ENCODE measurements at regions of chr20 and their contacts with region 1.

Region 1: GRCh38 chr20:51306503-51307358 is 235.8 kb downstream of the NFATC2 start:
- DNase-seq: peak; percentile 81
- H3K4me3 ChIP-seq: no peak overlapping the region
- H3K27ac ChIP-seq: no peak overlapping the region
- H3K4me1 ChIP-seq: peaks cover 0 to 6% (median 3%) of the 10 kb centered on the region in 4 donors
- H3K27me3 ChIP-seq: peaks cover 0 to 13% (median 0%) of the 10 kb centered on the region in 3 donors
- CTCF ChIP-seq: peak; percentile 68 to 91 (median 86)
- EP300 ChIP-seq: no peak
- POLR2A ChIP-seq: no peak

Region 2: GRCh38 chr20:50790651-50791277 is 516.0 kb before region 1 on chr20:
- intact Hi-C with region 1: loop called (anchors 10 kb)
- DNase-seq: peak; percentile 94
- H3K4me3 ChIP-seq: peak overlapping the region in 2 of 4 donors; percentile 22 to 28
- H3K27ac ChIP-seq: peak overlapping the region; percentile 78 to 85 (median 82)
- H3K4me1 ChIP-seq: peaks cover 0 to 57% (median 45%) of the 10 kb centered on the region in 4 donors
- H3K27me3 ChIP-seq: no peaks in the 10 kb centered on the region
- CTCF ChIP-seq: peak; percentile 50 to 80 (median 60)
- EP300 ChIP-seq: peak in 1 of 4 donors; percentile 66
- POLR2A ChIP-seq: no peak

Region 3: GRCh38 chr20:50987592-50988210 is 319.0 kb before region 1 on chr20:
- intact Hi-C with region 1: loop called (anchors 1 kb)
- DNase-seq: peak; percentile 83
- H3K4me3 ChIP-seq: no peak overlapping the region
- H3K27ac ChIP-seq: no peak overlapping the region
- H3K4me1 ChIP-seq: no peaks in the 10 kb centered on the region
- H3K27me3 ChIP-seq: peaks cover 0 to 37% (median 16%) of the 10 kb centered on the region in 3 donors
- CTCF ChIP-seq: peak; percentile 78 to 93 (median 88)
- EP300 ChIP-seq: no peak
- POLR2A ChIP-seq: no peak

Region 4: GRCh38 chr20:51230727-51231126 is 76.0 kb before region 1 on chr20:
- intact Hi-C with region 1: no loop called
- DNase-seq: no peak
- H3K4me3 ChIP-seq: no peak overlapping the region
- H3K27ac ChIP-seq: no peak overlapping the region
- H3K4me1 ChIP-seq: no peaks in the 10 kb centered on the region
- H3K27me3 ChIP-seq: peaks cover 0 to 13% (median 0%) of the 10 kb centered on the region in 3 donors
- CTCF ChIP-seq: no peak
- EP300 ChIP-seq: no peak
- POLR2A ChIP-seq: no peak

Region 5: DNA sequence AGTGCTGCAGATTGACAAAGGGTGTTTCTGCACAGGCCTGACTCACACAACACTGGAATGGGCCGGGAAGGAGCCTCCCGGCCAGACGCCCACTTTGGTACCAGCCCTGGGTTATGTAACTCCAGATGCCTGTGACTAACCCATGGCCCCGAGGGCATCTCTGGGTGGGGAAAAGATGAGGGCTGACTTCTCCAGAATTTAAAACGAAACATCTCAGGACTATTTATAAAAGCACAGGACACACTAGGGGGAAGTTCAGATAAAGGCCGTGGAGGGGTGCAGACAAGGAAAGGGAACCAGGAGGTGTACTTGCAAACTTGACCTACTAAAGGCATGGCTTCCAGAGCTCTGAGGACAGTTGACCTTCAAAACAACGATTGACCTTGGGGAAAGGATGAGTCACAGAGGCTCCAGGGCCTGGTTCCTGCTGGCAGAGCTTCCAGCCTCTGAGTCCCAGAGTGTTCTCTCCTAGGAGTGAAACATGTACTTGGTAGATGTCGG is 38.9 kb after region 1 on chr20:
- intact Hi-C with region 1: no loop called
- DNase-seq: peak; percentile 58
- H3K4me3 ChIP-seq: no peak overlapping the region
- H3K27ac ChIP-seq: no peak overlapping the region
- H3K4me1 ChIP-seq: no peaks in the 10 kb centered on the region
- H3K27me3 ChIP-seq: peaks cover 0 to 7% (median 0%) of the 10 kb centered on the region in 3 donors
- CTCF ChIP-seq: no peak
- EP300 ChIP-seq: no peak
- POLR2A ChIP-seq: no peak

Region 6: DNA sequence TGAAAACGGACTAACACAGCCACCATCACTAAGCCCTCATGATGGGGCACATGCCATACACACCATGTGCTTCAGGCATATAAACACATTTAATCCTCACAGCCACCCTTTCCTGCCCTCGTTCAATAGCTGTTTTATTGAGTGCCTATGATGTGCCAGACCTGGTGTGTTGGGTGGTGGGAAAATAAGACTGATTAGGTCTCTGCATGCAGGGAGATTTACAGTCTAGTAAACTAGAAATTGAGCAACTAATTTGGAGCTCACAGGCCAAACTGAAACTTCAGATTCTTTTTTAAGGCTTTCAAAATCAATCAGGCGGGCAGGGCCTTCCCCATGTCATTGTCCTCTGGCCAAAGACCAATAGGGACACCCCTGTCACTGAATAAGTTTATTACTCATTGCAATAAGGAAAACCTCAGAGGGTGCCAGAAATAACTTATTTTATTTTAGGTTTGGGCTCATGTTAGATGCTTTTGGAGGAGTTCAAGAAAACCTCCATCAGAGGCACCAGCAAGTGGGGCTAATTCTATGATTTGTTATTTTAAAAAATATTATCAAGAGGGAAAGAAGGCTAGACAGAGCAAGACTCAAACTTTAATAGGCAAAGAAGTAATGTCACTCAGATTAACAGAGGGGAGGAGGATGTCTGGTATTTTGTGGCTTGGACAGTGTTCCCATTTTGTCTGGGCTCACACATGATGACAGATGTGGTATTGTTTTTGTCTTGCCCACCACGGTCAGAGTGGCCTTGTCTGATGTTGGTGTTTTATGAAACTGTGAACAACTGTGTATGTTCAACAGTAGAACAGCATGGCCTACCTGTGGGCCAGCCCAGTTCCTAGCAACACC is 872.8 kb after region 1 on chr20:
- intact Hi-C with region 1: no loop called
- DNase-seq: no peak
- H3K4me3 ChIP-seq: no peak overlapping the region
- H3K27ac ChIP-seq: no peak overlapping the region
- H3K4me1 ChIP-seq: no peaks in the 10 kb centered on the region
- H3K27me3 ChIP-seq: no peaks in the 10 kb centered on the region
- CTCF ChIP-seq: no peak
- EP300 ChIP-seq: no peak
- POLR2A ChIP-seq: no peak